Activated T-helper 1 cell treated with anti-CD3 and anti-CD28 coated beads, Interleukin-12 subunit alpha, Interleukin-12 subunit beta, Interleukin-2, Interleukin-4 antibody, amounts not matched to agents 30 ng/mL and 10 ng/mL and 1 ng/mL, durations not matched to agents 14 hours and 24 hours and 36 hours (primary cell): ENCODE measurements at regions of chr12 and their contacts with region 1.

Region 1: DNA sequence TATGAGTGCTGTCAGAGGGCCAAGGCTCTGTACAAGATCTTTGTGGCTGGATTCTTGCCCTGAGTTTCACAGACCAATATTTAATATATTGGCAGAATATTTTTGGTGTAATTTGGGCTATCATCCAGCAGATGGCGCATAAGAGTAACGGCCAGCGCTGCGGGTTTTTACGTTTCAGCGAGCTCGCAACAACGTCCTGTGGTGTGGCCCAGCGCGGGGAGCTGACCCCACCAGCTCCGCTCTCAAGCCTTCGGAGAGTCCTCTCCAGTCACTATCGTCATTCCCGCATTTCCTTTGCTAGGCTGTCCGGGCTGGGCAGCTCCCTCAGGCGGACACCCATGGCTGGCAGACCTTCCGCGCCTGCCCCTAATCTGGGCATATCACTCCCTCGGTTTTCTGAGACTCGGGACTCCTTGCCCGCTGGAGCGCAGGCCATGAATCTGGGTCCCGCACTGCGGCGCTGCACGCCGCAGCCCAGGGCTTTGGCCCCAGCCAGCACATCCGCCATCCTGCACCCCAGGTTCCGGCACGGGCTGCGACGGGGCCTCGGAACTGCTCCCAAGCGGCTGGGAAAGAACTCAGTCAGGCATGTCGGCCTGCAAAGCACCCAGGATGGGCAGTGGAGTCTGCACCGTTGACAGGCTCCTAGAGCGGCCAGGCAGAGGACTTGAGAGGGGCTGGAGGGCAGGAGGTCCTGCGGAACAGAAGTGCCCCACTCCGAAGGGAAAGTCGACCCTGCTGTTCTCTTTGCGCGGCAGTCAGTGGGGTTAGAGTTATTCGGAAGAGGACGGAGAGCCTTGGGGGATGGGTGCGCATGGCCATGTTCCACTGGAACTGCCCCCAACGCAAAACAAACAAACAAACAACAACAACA is 18.4 kb downstream of the OLR1 start:
- DNase-seq: peak; percentile 30
- H3K4me3 Mint-ChIP-seq: peak overlapping the region; percentile 83
- H3K27ac Mint-ChIP-seq: no peak overlapping the region
- H3K4me1 Mint-ChIP-seq: peaks cover 5% of the 10 kb centered on the region
- H3K27me3 Mint-ChIP-seq: peaks cover 44% of the 10 kb centered on the region

Region 2: GRCh38 chr12:9920451-9920850 is 233.1 kb before region 1 on chr12:
- intact Hi-C with region 1: no loop called
- DNase-seq: no peak
- H3K4me3 Mint-ChIP-seq: no peak overlapping the region
- H3K27ac Mint-ChIP-seq: no peak overlapping the region
- H3K4me1 Mint-ChIP-seq: peaks cover 16% of the 10 kb centered on the region
- H3K27me3 Mint-ChIP-seq: peaks cover 9% of the 10 kb centered on the region

Region 3: DNA sequence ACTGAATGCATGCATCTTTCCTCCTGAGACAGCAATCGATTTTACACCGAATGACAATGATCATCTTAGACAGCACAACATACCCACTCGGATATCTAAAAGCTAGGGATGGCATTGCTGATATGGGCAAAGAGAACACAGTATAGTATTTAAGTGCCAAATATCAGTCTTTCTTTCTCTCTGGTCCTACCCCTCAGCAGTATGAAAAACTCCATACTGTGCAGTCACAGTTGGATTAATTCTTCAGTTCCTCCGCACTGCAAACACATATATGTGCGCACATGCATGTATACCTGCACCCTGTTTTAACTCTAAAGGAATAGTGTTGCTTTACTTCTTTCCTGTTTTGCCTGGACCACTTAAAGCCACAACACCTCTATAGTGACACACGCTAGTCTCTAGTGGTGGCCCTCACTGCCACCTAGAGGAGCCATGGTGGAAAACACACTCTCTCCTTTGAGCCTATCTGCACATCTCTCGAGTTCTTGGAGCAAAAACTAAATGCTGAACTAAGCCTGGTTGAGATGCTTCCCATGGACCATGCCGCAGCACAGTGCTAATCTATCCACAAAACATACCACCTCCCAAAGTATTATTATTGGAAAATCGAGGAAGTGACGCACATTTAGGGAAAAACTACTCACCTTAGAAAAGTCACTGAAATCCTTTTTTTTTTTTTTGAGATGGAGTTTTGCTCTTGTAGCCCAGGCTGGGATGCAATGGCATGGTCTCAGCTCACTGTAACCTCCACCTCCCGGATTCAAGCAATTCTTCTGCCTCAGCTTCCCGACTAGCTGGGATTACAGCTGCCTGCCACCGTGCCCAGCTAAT is 37.3 kb after region 1 on chr12:
- intact Hi-C with region 1: loop called (anchors 1 kb)
- DNase-seq: peak; percentile 23
- H3K4me3 Mint-ChIP-seq: no peak overlapping the region
- H3K27ac Mint-ChIP-seq: no peak overlapping the region
- H3K4me1 Mint-ChIP-seq: peaks cover 6% of the 10 kb centered on the region
- H3K27me3 Mint-ChIP-seq: peaks cover 35% of the 10 kb centered on the region

Region 4: DNA sequence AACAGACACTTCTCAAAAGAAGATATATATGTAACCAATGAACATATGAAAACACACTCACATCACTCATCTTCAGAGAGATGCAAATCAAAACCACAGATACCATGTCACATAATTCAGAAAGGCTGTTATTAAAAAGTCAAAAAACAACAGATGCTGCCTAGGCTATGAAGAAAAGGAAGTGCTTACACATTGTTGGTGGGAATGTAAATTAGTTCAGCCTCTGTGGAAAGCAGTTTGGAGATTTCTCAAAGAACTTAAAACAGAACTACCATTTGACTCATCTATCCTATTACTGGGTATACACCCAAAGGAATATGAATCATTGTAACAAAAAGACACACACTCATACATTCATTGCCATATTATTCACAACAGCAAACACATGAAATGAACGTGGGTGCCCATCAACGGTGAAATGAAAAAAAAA is 387.3 kb after region 1 on chr12:
- intact Hi-C with region 1: loop called (anchors 5 kb)
- DNase-seq: no peak
- H3K4me3 Mint-ChIP-seq: no peak overlapping the region
- H3K27ac Mint-ChIP-seq: peak overlapping the region; percentile 57
- H3K4me1 Mint-ChIP-seq: peaks cover 12% of the 10 kb centered on the region
- H3K27me3 Mint-ChIP-seq: peaks cover 5% of the 10 kb centered on the region

Region 5: DNA sequence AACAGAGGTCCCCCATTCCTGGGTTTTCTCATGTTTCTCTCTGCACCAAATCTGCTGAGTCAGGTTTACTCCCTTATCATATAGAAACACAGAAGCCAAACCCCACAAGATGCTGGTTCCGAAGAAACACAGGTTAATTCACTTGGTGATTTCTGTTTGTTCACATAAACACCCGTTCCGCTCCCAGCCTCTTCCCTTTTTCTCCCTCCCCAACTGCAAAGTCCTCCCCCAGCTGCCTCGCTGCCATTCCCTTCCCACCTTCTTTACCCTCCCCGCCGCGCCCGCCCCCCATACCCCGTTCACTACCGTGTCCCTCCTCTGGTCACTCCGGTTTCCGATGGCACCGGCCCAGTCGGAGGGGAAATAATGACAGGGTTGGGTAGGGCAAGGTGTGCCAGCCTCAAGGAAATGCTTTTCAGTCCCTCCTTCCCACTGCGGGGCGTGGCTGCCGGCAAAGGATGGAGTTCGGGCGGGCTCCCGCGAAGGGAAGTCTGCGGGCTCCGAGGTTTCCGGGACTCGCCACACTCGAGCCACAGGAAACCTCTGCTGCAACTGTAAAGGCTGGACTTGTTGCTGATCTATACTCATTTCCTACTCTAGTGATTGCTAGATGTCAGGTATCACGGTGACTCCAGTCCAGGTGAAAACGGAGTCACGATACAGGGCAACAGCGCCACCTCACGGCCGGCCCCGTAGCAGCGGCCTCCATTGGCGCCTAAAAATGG is 520.3 kb after region 1 on chr12 and contains the start of gene STYK1:
- intact Hi-C with region 1: loop called (anchors 1 kb)
- DNase-seq: peak; percentile 73
- H3K4me3 Mint-ChIP-seq: peak within 1 kb of the TSS; percentile 86
- H3K27ac Mint-ChIP-seq: peak within 1 kb of the TSS; percentile 72
- H3K4me1 Mint-ChIP-seq: peaks cover 74% of the 10 kb centered on the region
- H3K27me3 Mint-ChIP-seq: peaks cover 35% of the 10 kb centered on the region
- total RNA-seq, gene STYK1: 0.34 TPM in 1 of 2 replicates, not detected in the other

Region 6: GRCh38 chr12:11486623-11487444 is 1333.3 kb after region 1 on chr12:
- intact Hi-C with region 1: loop called (anchors 1 kb)
- DNase-seq: peak; percentile 68
- H3K4me3 Mint-ChIP-seq: no peak overlapping the region
- H3K27ac Mint-ChIP-seq: no peak overlapping the region
- H3K4me1 Mint-ChIP-seq: peaks cover 11% of the 10 kb centered on the region
- H3K27me3 Mint-ChIP-seq: peaks cover 10% of the 10 kb centered on the region